A673 (cell line): ENCODE measurements at regions of chr1 and their contacts with region 1.

Region 1: DNA sequence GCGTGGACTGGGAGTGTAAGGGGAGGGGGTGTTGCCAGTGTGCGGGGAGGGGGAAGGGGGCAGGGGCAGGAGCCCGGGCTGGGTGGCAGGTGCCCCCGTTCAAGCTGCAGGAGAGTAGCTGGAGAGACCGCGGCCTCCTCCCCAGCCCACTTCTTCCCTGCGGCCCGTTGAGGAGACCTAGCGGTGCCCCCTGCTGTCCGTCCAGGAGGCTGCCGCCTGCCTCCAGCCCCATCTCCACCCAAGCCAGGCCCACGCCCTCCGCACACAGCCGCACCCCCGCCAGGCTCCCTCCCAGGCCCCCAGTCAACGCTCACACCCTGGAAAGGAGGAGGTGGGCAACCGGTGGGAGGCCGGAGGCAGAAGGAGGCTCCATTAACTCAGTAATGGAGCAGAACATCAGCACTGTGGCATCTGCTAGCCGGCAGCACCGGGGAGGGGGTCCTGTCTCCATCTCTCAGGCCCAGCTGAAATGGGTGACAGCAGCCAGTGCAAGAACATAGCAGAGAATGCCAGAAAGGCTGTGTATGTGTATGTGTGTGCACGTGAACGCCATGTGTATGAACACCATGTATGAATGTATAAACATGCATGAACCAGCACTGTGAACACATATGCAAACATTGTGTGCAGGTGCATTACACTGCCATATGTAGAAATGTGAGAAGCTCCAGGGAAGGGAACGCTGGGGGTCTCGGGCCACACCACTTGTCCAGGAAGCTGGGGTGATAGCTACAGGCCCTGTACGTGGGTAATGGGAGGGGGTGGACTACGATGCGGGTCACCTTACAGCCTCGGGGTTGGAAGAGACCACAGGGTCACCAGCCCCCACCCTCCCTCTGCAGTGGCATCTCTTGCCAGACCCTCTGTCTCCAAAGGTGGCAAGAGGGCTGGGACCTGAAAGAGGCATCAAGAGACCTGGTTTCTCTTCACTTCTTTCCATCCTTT is 84.6 kb downstream of the SYT2 start:
- DNase-seq: peak; percentile 85
- H3K4me3 ChIP-seq: no peak overlapping the region
- H3K27ac ChIP-seq: peak overlapping the region; percentile 37
- H3K4me1 ChIP-seq: peaks cover 47% of the 10 kb centered on the region
- H3K27me3 ChIP-seq: no peaks in the 10 kb centered on the region
- CTCF ChIP-seq: peak; percentile 72

Region 2: DNA sequence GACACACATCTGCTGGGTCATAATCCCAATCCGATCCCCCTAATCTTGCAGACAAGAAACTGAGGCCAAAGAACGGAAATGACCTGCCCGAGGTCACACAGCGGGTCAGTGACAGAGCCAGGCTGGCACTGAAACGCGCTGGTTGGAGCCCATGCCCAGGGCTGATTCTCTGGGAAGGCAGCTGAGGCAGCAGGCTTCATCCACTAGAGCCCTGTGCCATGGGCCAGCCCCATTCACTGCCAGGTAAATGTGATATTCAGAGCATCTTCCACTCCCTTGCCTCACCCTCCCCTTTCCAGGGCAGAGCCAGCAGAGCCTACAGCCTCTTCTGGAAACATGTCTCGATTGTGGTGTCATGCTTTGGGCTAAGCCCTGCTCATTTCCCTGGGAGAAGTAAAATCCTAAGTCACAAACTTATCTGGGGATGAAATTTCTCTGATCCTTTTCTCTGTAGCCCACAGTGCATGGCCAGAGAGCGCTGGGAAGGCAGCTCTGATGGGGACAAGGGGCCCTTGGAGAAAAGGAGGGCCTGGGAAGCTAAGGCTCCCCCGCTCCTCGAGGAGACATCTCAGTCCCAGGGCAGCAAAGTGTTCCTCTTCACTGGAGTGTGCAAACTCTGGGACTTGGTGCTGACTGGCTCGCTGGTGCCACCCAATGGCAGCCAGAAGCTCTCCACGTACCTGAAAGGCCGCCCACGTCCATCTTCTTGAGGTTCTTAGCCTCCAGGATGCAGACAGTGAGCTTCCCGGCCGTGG is 25.8 kb before region 1 on chr1:
- CTCF ChIA-PET with region 1: interaction called, 11 read pairs
- POLR2A ChIA-PET with region 1: no interaction called
- intact Hi-C with region 1: no loop called
- DNase-seq: peak; percentile 84
- H3K4me3 ChIP-seq: no peak overlapping the region
- H3K27ac ChIP-seq: peak overlapping the region; percentile 6
- H3K4me1 ChIP-seq: no peaks in the 10 kb centered on the region
- H3K27me3 ChIP-seq: no peaks in the 10 kb centered on the region
- CTCF ChIP-seq: peak; percentile 96